AG04450 (cell line): ENCODE measurements at regions of chr3 and their contacts with region 1.

Region 1: DNA sequence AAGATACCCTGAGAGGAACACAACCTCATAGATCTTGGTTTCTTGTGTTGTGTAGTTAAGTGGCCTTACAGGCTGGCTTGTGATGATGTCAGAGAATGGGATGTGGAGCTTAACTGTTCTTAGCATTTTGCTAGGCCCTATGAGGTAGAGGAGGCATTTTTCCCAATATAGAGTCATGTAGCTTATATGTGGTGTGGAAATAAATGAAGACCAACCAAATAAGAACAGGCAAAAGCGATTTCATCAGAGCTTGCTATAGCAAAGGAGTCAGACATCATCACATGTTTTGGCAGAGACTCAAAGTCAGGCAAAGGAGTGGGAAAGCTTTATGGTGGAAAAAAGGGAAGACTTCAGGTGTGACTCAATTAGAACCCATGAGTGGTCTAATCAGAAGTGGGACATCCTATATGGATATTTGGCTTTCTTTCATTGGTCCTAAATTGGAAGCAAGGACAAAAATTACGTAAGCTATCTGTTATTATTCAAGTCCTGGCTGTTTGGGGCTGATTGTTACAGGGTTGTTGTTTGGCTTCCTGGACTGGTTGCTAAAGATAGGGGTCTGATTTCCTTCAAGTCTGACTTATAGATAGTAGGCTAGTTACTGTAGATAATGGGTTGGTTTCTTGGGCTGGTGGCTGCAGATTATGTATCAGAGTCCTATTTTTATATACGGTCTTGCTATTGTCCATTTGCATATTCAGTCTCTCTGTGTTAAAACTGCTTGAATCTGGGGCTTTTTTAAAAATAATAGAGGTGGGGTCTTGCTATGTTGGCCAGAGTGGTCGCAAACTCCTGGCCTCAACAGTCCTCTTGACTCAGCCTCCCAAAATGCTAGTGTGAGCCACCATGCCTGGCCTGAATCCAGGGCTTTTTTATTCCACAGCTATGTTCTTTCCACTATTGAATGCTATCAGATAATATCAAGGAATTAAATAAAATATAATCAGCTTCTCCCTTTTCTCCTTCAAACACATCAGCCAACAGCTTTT is 30.3 kb upstream of the SETD2 start:
- DNase-seq: no peak
- H3K4me3 ChIP-seq: no peak overlapping the region
- H3K27ac ChIP-seq: no peak overlapping the region
- H3K27me3 ChIP-seq: no peaks in the 10 kb centered on the region
- CTCF ChIP-seq: no peak

Region 2: GRCh38 chr3:47145272-47145671 is 48.9 kb before region 1 on chr3:
- CTCF ChIA-PET with region 1: interaction called, 12 read pairs
- POLR2A ChIA-PET with region 1: no interaction called
- DNase-seq: no peak
- H3K4me3 ChIP-seq: no peak overlapping the region
- H3K27ac ChIP-seq: no peak overlapping the region
- H3K27me3 ChIP-seq: no peaks in the 10 kb centered on the region
- CTCF ChIP-seq: no peak

Region 3: DNA sequence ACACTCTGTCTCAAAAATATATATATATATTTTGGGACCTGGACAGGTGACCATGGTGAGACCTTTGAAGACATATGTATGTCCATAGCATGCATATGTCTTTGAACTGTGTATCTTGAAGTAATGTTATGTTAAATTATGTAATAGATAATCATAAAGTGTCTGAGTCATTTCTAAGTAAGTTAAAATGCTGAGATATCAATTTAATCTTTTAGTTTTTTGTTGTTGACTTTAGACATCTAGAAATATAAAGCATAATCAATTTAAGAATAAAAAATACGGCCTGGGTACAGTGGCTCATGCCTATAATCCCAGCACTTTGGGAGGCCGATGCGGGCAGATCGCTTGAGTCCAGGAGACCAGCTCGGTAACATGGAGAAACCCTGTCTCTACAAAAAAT is 17.6 kb before region 1 on chr3:
- CTCF ChIA-PET with region 1: no interaction called
- POLR2A ChIA-PET with region 1: no interaction called
- DNase-seq: no peak
- H3K4me3 ChIP-seq: no peak overlapping the region
- H3K27ac ChIP-seq: no peak overlapping the region
- H3K27me3 ChIP-seq: no peaks in the 10 kb centered on the region
- CTCF ChIP-seq: no peak

Region 4: DNA sequence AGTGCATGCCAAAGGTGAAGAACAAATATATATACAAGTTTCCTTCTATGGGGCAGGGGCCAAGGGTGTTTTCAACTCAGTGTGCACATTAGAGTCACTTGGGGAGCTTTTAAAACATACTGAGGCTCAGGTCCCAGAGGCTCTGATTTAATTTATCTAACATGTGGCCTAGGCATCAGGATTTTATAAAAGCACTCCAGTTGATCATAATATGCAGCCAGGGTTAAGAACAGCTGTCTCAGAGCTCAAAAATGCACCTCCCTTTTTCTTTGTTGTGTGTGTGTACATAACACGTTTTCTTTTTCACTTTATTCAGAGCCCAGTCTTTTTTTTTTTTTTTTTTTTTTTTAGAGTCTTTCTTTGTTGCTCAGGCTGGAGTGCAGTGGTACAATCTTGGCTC is 27.6 kb after region 1 on chr3:
- CTCF ChIA-PET with region 1: no interaction called
- POLR2A ChIA-PET with region 1: no interaction called
- DNase-seq: no peak
- H3K4me3 ChIP-seq: no peak overlapping the region
- H3K27ac ChIP-seq: no peak overlapping the region
- H3K27me3 ChIP-seq: no peaks in the 10 kb centered on the region
- CTCF ChIP-seq: no peak

Region 5: DNA sequence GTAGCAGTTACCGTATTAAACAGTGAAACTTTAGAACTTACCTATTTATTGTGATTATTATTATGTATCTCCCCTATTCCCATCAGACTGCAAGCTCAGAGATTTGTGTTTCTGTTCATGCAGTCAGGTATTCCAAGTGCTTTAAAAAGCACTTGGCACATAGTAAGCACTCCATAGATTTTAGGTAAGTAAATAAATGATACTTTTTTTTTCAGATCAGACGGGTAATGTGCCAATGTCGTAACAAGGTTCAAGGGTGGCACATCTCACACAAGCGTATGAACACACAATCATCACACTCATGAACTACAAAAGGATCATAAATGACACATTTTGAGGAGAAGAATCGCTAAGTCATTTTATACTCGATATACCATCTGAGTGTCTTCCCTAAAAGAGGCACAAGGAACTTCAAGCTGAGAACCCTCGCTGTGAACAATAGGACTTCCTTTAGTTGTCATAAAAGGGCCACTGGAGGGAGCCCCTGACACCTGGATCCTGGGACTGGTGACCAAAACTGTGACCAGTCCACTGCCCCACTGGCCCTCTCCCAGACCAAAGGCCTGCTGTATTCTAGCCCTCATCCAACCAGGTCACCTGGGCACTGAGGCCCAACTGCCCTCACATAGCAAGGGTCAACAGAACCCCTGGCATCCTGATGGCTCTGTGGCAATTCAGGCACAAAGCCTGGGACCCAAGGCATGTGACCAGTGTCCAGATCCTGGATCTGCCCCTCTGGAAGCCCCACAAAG is 56.3 kb after region 1 on chr3:
- CTCF ChIA-PET with region 1: no interaction called
- POLR2A ChIA-PET with region 1: no interaction called
- DNase-seq: no peak
- H3K4me3 ChIP-seq: no peak overlapping the region
- H3K27ac ChIP-seq: no peak overlapping the region
- H3K27me3 ChIP-seq: peaks cover 8% of the 10 kb centered on the region
- CTCF ChIP-seq: peak; percentile 40